Sciatic nerve (tissue), 2 donors: ENCODE measurements at regions of chr1 and their contacts with region 1.

Region 1: GRCh38 chr1:37946703-37947360 is at the start of gene INPP5B:
- DNase-seq: peak; percentile 91
- ATAC-seq: peak; percentile 96
- total RNA-seq, gene INPP5B: 44.4 TPM

Region 2: DNA sequence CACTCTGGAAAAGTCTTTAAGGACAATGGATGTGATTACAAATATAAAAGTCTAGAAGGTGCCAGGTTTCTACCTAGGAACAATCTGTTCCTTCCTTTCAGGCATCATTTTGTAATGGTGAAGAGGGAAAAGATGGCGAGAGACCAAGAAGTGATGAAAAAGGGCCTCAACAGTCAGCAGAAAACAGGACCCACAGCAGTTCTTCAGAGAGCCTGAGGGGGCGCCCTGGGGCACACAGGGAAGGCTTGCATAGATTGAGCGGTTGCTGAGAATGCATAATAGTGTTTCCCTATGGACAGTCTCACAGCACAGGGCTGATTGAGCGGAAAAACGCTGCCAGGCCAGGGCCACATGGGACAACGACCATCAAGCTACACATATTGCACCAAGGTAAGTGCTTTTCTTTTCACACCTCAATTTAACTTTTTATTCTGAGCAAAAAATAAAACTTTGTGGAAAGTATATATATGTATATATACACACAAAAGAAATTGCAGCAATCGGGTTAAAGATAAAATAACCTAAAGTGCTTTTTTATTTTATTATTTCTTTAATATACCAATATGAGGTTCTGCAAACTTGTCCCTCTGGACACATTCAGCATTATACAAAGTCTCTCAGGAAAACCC is 135.7 kb before region 1 on chr1:
- intact Hi-C with region 1: no loop called
- DNase-seq: no peak
- ATAC-seq: no peak

Region 3: DNA sequence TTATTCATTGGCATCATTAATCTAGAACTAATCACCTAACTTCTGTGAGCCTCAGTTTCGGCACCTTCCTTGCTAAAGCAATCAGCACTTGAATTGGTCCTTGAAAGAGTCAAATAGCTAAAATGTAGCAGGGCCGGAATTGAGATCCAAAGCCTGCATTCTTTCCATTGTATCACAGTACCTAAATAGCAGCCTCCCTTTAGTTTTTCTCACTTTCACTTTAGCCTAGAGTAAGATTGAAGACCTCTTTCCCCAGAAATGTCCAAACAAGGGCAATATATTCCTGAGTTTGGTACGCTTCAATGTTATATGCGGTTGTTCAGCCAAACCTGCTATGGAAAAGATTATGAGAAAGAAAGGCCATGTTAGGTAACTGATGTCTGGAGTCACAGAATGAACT is 1422.7 kb after region 1 on chr1:
- intact Hi-C with region 1: loop called (anchors 5 kb)
- DNase-seq: no peak
- ATAC-seq: no peak